Vagina (tissue), 2 donors: ENCODE measurements at regions of chr20 and their contacts with region 1.

Region 1: DNA sequence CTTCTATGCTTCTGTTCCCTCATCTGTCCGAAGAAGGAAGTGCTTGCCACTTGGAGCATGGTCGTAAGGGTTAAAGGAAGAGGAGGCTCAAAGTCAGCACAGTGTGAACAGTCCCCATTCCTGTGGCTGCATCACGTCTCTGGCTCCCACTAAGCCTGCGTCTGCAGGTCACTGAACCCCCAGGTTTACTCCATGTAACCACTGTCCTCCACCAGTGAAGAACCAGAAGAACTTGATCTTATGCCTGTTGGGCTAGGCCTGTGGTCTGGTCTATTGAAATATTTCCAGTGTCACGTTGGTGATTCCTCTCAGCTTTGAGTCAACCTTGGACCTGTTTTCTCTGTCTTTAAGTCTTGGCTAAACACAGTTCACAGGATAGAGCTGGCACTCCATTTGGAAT is 45.9 kb upstream of the SCP2D1 start:
- DNase-seq: no peak
- H3K4me3 ChIP-seq: no peak overlapping the region
- H3K27ac ChIP-seq: no peak overlapping the region
- H3K4me1 ChIP-seq: no peaks in the 10 kb centered on the region
- H3K27me3 ChIP-seq: no peaks in the 10 kb centered on the region
- CTCF ChIP-seq: no peak
- POLR2A ChIP-seq: no peak

Region 2: DNA sequence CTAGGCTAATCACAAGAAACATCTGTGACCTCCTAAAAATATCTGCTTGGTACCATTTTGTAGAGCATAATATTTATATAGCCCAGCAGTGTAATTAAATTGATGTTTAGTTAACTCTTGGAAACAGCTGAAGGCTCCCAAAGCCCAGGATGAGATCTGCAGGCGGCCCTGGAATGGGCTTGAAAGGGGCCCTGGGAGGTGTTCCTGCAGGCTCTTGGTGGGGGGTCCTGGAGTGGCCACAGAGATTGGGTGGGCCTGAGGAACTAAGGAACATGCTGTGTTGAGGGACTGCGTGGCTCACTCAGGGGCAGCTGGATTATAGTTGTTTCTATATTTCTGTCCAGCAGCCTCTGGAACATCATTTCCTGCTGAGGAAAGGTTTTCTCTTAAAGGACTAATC is 55.2 kb after region 1 on chr20:
- intact Hi-C with region 1: loop called (anchors 10 kb)
- DNase-seq: no peak
- H3K4me3 ChIP-seq: no peak overlapping the region
- H3K27ac ChIP-seq: no peak overlapping the region
- H3K4me1 ChIP-seq: no peaks in the 10 kb centered on the region
- H3K27me3 ChIP-seq: no peaks in the 10 kb centered on the region
- CTCF ChIP-seq: no peak
- POLR2A ChIP-seq: no peak

Region 3: DNA sequence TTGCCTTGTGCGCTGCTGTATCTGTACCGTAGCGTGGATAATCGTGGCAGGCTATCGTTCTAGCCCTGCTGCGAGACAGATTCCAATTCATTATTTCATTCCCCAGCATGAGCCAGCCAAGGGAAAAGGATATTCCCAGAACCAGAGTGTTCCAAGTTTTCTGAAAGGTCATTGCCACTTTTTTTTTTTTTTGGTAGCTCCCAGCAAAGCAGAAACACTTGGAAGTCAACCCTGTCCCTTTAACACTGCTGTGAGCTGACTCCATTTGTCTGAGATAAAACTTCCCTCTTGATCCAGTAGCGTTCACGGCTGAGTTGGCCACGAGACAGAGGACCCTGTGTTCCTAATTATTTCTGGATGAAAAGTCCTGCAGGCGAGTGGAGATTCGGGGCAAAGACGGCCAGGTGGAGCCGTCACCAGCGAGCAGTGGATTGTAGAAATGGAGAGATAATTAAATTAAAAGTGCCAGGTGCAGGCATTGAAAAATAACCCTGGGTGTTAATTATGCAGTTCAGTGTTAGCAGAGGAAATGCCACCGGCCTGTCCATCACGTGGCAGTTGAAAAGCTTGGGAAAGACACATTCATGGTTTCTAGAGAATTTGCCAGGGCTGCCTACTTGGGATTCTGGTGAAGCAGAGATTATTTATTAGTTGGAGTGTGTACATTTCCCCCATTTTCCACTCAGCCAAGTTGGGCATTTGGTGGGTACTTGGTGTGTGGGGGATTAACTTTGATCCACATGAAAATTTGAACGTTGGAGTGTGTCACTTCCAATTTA is 609.0 kb after region 1 on chr20:
- intact Hi-C with region 1: no loop called
- DNase-seq: peak in 1 of 2 donors; percentile 62
- H3K4me3 ChIP-seq: no peak overlapping the region
- H3K27ac ChIP-seq: no peak overlapping the region
- H3K4me1 ChIP-seq: no peaks in the 10 kb centered on the region
- H3K27me3 ChIP-seq: no peaks in the 10 kb centered on the region
- CTCF ChIP-seq: no peak
- POLR2A ChIP-seq: no peak